OCI-LY7 (cell line): ENCODE measurements at regions of chr10 and their contacts with region 1.

Region 1: GRCh38 chr10:89643431-89644331 is 1.4 kb downstream of the PANK1 start:
- DNase-seq: peak; percentile 96
- H3K4me3 ChIP-seq: peak overlapping the region; percentile 78
- H3K27ac ChIP-seq: peak overlapping the region; percentile 71
- H3K4me1 ChIP-seq: peaks cover 32% of the 10 kb centered on the region
- CTCF ChIP-seq: no peak

Region 2: DNA sequence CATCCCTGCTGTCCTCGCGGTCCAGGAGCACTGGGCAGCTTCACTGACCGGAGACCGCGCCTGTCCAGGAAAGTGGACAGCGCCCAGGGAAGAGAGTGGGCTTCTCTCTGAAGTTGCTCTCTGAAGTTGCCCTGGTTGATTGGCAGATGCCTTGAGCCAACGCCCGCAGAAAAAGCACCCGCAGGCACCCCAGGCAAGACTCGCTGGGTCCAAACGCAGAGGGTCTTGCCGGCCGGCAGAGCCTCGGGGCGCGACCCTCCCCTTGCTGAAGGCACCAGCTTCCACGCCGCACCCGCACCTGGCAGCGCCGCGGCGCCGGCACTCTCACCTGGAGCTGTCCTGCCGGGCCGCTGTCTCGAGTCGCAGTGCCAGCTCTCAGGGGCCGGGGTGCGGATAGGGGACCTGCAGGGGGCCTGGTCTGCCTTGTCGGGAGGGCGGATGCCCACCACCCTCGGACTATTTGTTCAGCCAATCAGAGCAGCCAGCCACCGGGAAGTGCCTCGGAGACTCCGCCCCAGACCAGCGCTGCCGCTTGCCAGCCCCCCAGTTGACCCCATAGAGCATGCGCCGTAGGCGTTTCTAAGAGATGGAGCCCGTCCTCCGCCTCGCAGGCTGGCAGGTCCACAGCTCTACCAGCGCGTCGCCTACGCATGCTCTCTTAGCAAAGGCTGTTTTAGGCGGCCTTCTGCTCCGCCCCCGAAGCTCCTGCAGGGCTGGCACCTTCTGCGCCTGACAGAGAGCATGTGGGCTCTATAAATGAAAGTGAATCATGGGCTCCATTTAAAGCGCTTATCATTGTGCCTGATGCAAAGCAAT is 392.1 kb before region 1 on chr10 and contains the start of gene LIPA:
- CTCF ChIA-PET with region 1: no interaction called
- POLR2A ChIA-PET with region 1: interaction called, 3 read pairs
- intact Hi-C with region 1: loop called (anchors 5 kb)
- DNase-seq: peak; percentile 97
- H3K4me3 ChIP-seq: peak within 1 kb of the TSS; percentile 81
- H3K27ac ChIP-seq: no peak within 1 kb of the TSS
- H3K4me1 ChIP-seq: peaks cover 7% of the 10 kb centered on the region
- CTCF ChIP-seq: no peak
- total RNA-seq, gene LIPA: 8.9 and 11.7 TPM in 2 replicates

Region 3: GRCh38 chr10:89369156-89370105 is 274.2 kb before region 1 on chr10:
- CTCF ChIA-PET with region 1: no interaction called
- POLR2A ChIA-PET with region 1: no interaction called
- intact Hi-C with region 1: no loop called
- DNase-seq: peak; percentile 23
- H3K4me3 ChIP-seq: no peak overlapping the region
- H3K27ac ChIP-seq: no peak overlapping the region
- H3K4me1 ChIP-seq: no peaks in the 10 kb centered on the region
- CTCF ChIP-seq: peak; percentile 82

Region 4: DNA sequence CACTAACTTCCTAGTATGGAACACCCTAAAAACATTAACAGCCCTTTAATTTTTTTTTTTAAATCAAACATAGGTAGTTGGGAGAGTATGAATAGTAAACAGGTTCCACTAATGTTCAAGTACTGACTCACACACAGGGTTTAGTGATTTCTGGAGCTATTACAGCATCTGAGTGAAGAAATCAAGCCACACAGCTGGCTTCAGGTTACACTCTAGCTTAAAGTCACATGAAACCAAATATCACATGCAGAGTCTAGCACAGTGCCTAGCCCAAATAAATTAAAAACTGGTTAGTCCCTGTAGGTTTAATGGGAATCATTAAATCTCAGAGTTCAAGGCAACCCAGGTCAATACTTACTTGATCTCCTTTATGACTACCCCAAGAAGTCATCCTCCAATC is 10.2 kb before region 1 on chr10:
- CTCF ChIA-PET with region 1: no interaction called
- POLR2A ChIA-PET with region 1: interaction called, 18 read pairs
- intact Hi-C with region 1: no loop called
- DNase-seq: no peak
- H3K4me3 ChIP-seq: no peak overlapping the region
- H3K27ac ChIP-seq: no peak overlapping the region
- H3K4me1 ChIP-seq: no peaks in the 10 kb centered on the region
- CTCF ChIP-seq: no peak

Region 5: GRCh38 chr10:89668386-89669071 is 24.8 kb after region 1 on chr10:
- CTCF ChIA-PET with region 1: no interaction called
- POLR2A ChIA-PET with region 1: interaction called, 10 read pairs
- intact Hi-C with region 1: no loop called
- DNase-seq: no peak
- H3K4me3 ChIP-seq: no peak overlapping the region
- H3K27ac ChIP-seq: no peak overlapping the region
- H3K4me1 ChIP-seq: no peaks in the 10 kb centered on the region
- CTCF ChIP-seq: no peak

Region 6: DNA sequence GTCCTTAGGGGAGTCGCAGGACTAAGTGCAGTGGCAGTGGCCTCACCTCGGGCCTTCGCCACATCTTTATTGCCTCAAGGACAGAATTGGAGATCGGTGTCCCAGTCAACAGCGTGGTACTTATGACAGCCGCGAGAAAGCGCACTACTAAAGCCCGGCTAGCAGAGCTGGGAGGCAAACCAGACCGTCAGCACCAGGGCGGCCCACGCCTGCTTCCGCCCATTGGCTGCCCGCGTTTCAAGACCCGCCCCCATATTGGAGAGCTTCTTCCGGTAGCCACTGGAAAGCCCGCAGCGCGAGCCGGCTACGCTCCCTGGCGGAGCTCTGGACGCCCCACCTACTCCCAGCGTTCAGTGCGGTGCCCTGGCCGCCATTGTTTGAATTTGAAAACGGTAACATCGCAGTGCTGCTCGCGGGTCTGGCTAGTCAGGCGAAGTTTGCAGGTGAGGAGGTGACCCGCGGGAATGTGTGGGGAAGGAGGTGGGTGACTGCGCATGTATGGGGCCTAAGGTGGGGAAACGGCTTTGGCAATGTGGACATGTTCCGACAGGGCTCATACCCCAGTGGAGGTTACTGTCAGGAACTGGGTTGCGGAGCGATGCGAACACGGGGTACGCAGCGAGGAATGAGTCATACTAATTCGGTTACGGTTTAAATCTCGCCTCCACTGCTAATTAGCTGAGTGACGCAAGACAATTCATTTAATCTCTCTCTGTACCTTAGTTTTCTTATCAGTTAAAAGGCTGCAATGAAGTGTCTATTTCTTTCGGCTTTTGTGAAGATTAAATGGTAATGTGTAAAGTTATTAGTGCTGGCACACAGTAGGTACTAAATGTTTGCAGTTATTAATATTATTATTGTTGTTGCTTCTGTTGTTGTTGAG is 57.8 kb after region 1 on chr10 and contains the start of gene KIF20B:
- CTCF ChIA-PET with region 1: no interaction called
- POLR2A ChIA-PET with region 1: interaction called, 22 read pairs
- intact Hi-C with region 1: loop called (anchors 1 kb)
- DNase-seq: peak; percentile 97
- H3K4me3 ChIP-seq: peak within 1 kb of the TSS; percentile 92
- H3K27ac ChIP-seq: peak within 1 kb of the TSS; percentile 74
- H3K4me1 ChIP-seq: peaks cover 45% of the 10 kb centered on the region
- CTCF ChIP-seq: 0 out of 2 replicates have a peak, but pooled peaks have one; percentile 30
- total RNA-seq, gene KIF20B: 25.0 and 30.2 TPM in 2 replicates

Region 7: DNA sequence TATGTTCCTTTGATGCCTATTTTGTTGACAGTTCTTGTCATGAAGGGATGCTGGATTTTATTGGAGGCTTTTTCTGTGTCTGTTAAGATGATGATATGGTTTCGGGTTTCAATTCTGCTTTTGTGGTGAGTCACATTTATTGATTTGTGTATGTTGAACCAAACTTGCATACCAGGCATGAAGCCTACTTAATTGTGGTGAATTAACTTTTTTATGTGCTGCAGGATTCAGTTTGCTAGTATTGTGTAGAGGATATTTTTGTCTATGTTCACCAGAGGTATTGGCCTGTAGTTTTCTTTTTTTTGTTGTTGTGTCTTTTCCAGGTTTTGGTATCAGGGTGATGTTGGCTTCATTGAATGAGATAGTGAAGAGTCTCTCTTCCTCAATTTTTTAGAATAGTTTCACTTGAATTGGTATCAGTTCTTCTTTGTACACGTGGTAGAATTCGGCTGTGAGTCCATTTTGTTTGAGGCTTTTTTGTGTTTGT is 403.6 kb after region 1 on chr10:
- CTCF ChIA-PET with region 1: no interaction called
- POLR2A ChIA-PET with region 1: interaction called, 4 read pairs
- intact Hi-C with region 1: loop called (anchors 10 kb)
- DNase-seq: peak; percentile 80
- H3K4me3 ChIP-seq: peak overlapping the region; percentile 5
- H3K27ac ChIP-seq: peak overlapping the region; percentile 85
- H3K4me1 ChIP-seq: peaks cover 33% of the 10 kb centered on the region
- CTCF ChIP-seq: no peak